HepG2 (cell line): ENCODE measurements at regions of chrX and their contacts with region 1.

Region 1: GRCh38 chrX:121479406-121479805 is 432.0 kb downstream of the GLUD2 start:
- DNase-seq: no peak
- ATAC-seq: no peak
- H3K4me3 ChIP-seq: no peak overlapping the region
- H3K27ac ChIP-seq: no peak overlapping the region
- H3K4me1 ChIP-seq: no peaks in the 10 kb centered on the region
- H3K27me3 ChIP-seq: no peaks in the 10 kb centered on the region
- CTCF ChIP-seq: no peak
- EP300 ChIP-seq: no peak
- POLR2A ChIP-seq: no peak
- RAD21 ChIP-seq: no peak

Region 2: GRCh38 chrX:120365320-120365719 is 1114.1 kb before region 1 on chrX:
- CTCF ChIA-PET with region 1: no interaction called
- POLR2A ChIA-PET with region 1: no interaction called
- in situ Hi-C with region 1: no loop called
- intact Hi-C with region 1: no loop called
- DNase-seq: peak; percentile 6
- ATAC-seq: peak; percentile 70
- H3K4me3 ChIP-seq: no peak overlapping the region
- H3K27ac ChIP-seq: no peak overlapping the region
- H3K4me1 ChIP-seq: no peaks in the 10 kb centered on the region
- H3K27me3 ChIP-seq: no peaks in the 10 kb centered on the region
- CTCF ChIP-seq: peak; percentile 51
- EP300 ChIP-seq: no peak
- POLR2A ChIP-seq: no peak
- RAD21 ChIP-seq: no peak

Region 3: GRCh38 chrX:121902463-121902862 is 423.1 kb after region 1 on chrX:
- CTCF ChIA-PET with region 1: no interaction called
- POLR2A ChIA-PET with region 1: no interaction called
- in situ Hi-C with region 1: no loop called
- intact Hi-C with region 1: loop called (anchors 5 kb)
- DNase-seq: no peak
- ATAC-seq: no peak
- H3K4me3 ChIP-seq: no peak overlapping the region
- H3K27ac ChIP-seq: no peak overlapping the region
- H3K4me1 ChIP-seq: no peaks in the 10 kb centered on the region
- H3K27me3 ChIP-seq: no peaks in the 10 kb centered on the region
- CTCF ChIP-seq: no peak
- EP300 ChIP-seq: no peak
- POLR2A ChIP-seq: no peak
- RAD21 ChIP-seq: no peak